GM12878 (cell line): ENCODE measurements at regions of chr7 and their contacts with region 1.

Region 1: GRCh38 chr7:69953136-69954067 is 355.1 kb downstream of the AUTS2 start:
- DNase-seq: no peak
- ATAC-seq: peak; percentile 81
- H3K4me3 ChIP-seq: peak overlapping the region; percentile 3; the same call in 1 of the 2 replicates
- H3K27ac ChIP-seq: peak overlapping the region; percentile 57
- H3K4me1 ChIP-seq: peaks cover 16% of the 10 kb centered on the region
- H3K27me3 ChIP-seq: no peaks in the 10 kb centered on the region
- CTCF ChIP-seq: no peak
- EP300 ChIP-seq: no peak
- POLR2A ChIP-seq: no peak
- RAD21 ChIP-seq: no peak

Region 2: DNA sequence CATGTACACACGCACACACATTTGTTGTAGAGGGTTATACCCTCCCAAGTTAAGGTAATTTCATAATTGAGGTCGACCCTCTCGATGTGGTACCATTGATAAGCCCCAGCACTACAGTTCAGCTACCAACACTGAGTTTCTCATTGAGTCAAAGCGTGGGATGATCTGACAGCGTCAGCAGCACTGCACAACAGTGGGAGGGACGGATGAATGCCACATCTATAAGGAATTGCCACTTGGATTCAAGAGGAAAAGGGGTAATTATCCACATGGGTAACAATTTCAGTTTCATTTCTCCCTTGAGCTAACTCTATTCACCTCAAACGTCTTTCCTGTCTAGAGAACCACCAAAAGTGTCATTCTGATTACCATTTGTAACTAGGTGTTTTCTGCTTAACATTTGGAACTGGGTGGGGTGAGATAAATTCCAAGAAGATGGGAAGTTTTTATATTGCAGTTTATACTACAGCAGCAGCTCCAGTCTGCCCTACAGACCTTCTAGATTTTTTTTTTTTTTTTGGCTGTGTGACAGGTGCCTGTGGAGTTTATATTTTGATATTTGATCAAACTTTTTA is 12.2 kb before region 1 on chr7:
- CTCF ChIA-PET with region 1: interaction called, 11 read pairs
- POLR2A ChIA-PET with region 1: no interaction called
- RAD21 ChIA-PET with region 1: no interaction called
- SMC1A ChIA-PET with region 1: interaction called, 4 read pairs
- in situ Hi-C with region 1: no loop called
- intact Hi-C with region 1: no loop called
- DNase-seq: no peak
- ATAC-seq: peak; percentile 57
- H3K4me3 ChIP-seq: no peak overlapping the region
- H3K27ac ChIP-seq: no peak overlapping the region
- H3K4me1 ChIP-seq: peaks cover 4% of the 10 kb centered on the region
- H3K27me3 ChIP-seq: no peaks in the 10 kb centered on the region
- CTCF ChIP-seq: no peak
- EP300 ChIP-seq: no peak
- POLR2A ChIP-seq: no peak
- RAD21 ChIP-seq: no peak